ENCODE measurements at regions of chr16 and their contacts with region 1.

Region 1: GRCh38 chr16:70478912-70479341 is 24.5 kb downstream of the FCSK start:
- DNase-seq: no peak
- ATAC-seq: no peak
- H3K4me3 Mint-ChIP-seq: no peak overlapping the region
- H3K27ac Mint-ChIP-seq: peak overlapping the region; percentile 19
- H3K4me1 Mint-ChIP-seq: peaks cover 26% of the 10 kb centered on the region
- H3K27me3 Mint-ChIP-seq: no peaks in the 10 kb centered on the region

Region 2: DNA sequence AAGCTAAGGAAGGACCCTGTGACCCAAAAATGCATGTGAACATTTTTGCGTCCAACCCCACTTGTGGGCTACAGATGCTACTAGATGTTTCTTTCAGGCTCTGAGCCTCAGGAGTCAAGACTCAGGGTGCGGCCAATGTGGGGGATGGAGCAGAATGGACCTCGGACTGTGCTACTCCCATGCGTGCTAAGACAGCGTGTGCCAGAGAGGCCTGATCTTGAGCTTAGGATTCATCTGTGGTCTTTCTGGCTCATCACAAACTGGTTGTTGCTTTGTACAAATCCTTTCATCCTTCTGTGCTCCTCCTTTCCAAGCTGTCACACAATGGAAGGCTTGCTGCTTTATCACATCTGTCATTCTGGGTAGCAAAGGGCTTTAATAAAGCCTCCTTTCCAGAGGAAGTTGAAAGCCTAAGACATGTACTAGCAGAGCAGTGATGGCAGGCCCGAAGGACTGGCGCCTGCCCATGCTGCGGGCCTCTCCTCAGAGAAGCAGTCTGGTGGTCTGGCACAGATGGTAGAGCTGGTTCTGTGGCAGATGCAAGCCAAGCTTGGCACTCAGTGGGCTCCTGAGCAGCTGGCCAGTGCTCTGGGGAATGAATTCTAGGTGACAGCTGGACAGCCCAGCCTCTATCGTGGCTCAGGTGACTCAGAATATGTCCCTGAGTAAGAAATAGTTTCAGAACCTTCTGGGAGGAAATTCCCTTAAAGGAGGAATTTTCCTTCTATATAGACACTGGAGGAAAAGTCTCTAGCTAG is 16.7 kb after region 1 on chr16:
- CTCF ChIA-PET with region 1: interaction called, 5 read pairs
- POLR2A ChIA-PET with region 1: no interaction called
- intact Hi-C with region 1: loop called (anchors 1 to 2 kb)
- DNase-seq: no peak
- ATAC-seq: no peak
- H3K4me3 Mint-ChIP-seq: no peak overlapping the region
- H3K27ac Mint-ChIP-seq: no peak overlapping the region
- H3K4me1 Mint-ChIP-seq: peaks cover 20% of the 10 kb centered on the region
- H3K27me3 Mint-ChIP-seq: no peaks in the 10 kb centered on the region